ENCODE measurements at regions of chr14 and their contacts with region 1.

Region 1: GRCh38 chr14:97718886-97719442 is 921.8 kb downstream of the VRK1 start:
- DNase-seq: no peak
- ATAC-seq: no peak
- H3K4me3 ChIP-seq: no peak overlapping the region
- H3K27ac ChIP-seq: no peak overlapping the region
- H3K4me1 ChIP-seq: no peaks in the 10 kb centered on the region
- H3K27me3 ChIP-seq: no peaks in the 10 kb centered on the region
- CTCF ChIP-seq: no peak

Region 2: GRCh38 chr14:97970222-97970621 is 251.3 kb after region 1 on chr14:
- CTCF ChIA-PET with region 1: interaction called, 11 read pairs
- POLR2A ChIA-PET with region 1: no interaction called
- in situ Hi-C with region 1: no loop called
- intact Hi-C with region 1: no loop called
- DNase-seq: no peak
- ATAC-seq: no peak
- H3K4me3 ChIP-seq: no peak overlapping the region
- H3K27ac ChIP-seq: no peak overlapping the region
- H3K4me1 ChIP-seq: no peaks in the 10 kb centered on the region
- H3K27me3 ChIP-seq: no peaks in the 10 kb centered on the region
- CTCF ChIP-seq: no peak